Activated CD4-positive, alpha-beta memory T cell treated with anti-CD3 and anti-CD28 coated beads for 36 hours (primary cell): ENCODE measurements at regions of chr12 and their contacts with region 1.

Region 1: DNA sequence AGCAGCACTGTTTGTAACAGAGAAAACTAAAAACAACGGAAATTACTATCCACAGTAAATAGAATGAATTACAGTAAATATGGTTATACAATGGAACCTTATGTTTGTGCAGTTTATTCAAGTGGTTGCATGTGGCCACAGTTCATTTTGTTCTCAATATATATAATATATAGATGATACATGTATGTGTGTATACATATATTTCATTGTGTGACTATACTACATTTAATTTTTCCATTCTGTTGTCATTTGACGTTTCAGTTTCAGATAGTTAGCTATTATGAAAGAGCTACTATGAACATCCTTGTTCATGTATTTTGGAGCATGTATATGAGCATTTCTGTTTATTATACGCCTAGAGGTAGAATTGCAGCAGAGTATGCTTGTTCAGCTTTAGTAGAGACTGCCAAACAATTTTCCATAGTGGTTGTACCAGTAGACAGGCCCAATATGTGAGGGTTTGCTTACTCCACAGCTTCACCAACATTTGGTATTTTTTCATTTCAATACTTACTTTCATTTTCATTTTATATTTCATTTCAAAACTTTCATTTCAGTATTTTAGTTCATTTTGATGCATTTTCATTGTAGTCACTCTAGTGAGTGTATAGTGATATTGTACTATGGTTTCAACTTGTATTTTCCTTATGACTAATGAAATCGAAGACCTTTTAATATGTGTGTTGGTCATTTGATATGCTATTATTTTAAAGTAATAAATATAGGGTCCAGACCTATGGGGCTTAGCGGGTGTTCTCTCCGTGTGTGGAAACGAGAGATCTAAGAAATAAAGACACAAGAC is 141.5 kb upstream of the FGD4 start:
- DNase-seq: no peak
- H3K4me3 Mint-ChIP-seq: no peak overlapping the region
- H3K27ac Mint-ChIP-seq: no peak overlapping the region
- H3K4me1 Mint-ChIP-seq: peaks cover 11% of the 10 kb centered on the region
- H3K27me3 Mint-ChIP-seq: no peaks in the 10 kb centered on the region

Region 2: GRCh38 chr12:32198555-32198954 is 59.3 kb before region 1 on chr12:
- CTCF ChIA-PET with region 1: no interaction called
- POLR2A ChIA-PET with region 1: interaction called, 3 read pairs
- intact Hi-C with region 1: loop called (anchors 5 kb)
- DNase-seq: peak; percentile 15
- H3K4me3 Mint-ChIP-seq: no peak overlapping the region
- H3K27ac Mint-ChIP-seq: no peak overlapping the region
- H3K4me1 Mint-ChIP-seq: peaks cover 13% of the 10 kb centered on the region
- H3K27me3 Mint-ChIP-seq: no peaks in the 10 kb centered on the region

Region 3: GRCh38 chr12:32322354-32322753 is 64.5 kb after region 1 on chr12:
- CTCF ChIA-PET with region 1: no interaction called
- POLR2A ChIA-PET with region 1: no interaction called
- intact Hi-C with region 1: no loop called
- DNase-seq: no peak
- H3K4me3 Mint-ChIP-seq: no peak overlapping the region
- H3K27ac Mint-ChIP-seq: no peak overlapping the region
- H3K4me1 Mint-ChIP-seq: no peaks in the 10 kb centered on the region
- H3K27me3 Mint-ChIP-seq: no peaks in the 10 kb centered on the region

Region 4: DNA sequence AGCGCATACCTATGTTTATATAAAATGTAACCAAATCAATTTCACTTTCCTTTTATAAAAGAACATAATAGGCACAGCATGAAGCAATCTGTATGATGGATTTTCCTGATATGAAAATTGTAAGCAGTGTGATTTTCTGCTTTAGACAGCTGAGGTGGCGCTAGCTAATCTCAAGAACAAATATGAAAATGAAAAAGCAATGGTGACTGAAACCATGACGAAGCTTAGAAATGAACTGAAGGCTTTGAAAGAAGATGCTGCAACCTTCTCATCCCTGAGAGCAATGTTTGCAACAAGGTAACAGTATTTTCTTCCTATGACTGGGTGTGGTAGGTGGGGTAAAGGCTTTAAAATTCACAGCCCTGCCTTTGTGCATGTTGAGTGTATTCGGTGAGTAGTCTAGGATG is 76.5 kb after region 1 on chr12:
- CTCF ChIA-PET with region 1: no interaction called
- POLR2A ChIA-PET with region 1: no interaction called
- intact Hi-C with region 1: loop called (anchors 1 kb)
- DNase-seq: peak; percentile 11
- H3K4me3 Mint-ChIP-seq: no peak overlapping the region
- H3K27ac Mint-ChIP-seq: peak overlapping the region; percentile 51
- H3K4me1 Mint-ChIP-seq: peaks cover 5% of the 10 kb centered on the region
- H3K27me3 Mint-ChIP-seq: no peaks in the 10 kb centered on the region